Activated naive CD4-positive, alpha-beta T cell treated with anti-CD3 and anti-CD28 coated beads, Interleukin-2, amount 10 ng/mL, durations not matched to agents 7 days and 5 days (primary cell): ENCODE measurements at regions of chr12 and their contacts with region 1.

Region 1: GRCh38 chr12:51341259-51342007 is 5.0 kb downstream of the CELA1 start:
- DNase-seq: peak; percentile 82
- H3K4me3 Mint-ChIP-seq: no peak overlapping the region
- H3K27ac Mint-ChIP-seq: no peak overlapping the region
- H3K4me1 Mint-ChIP-seq: peaks cover 12% of the 10 kb centered on the region
- H3K27me3 Mint-ChIP-seq: peaks cover 7% of the 10 kb centered on the region

Region 2: DNA sequence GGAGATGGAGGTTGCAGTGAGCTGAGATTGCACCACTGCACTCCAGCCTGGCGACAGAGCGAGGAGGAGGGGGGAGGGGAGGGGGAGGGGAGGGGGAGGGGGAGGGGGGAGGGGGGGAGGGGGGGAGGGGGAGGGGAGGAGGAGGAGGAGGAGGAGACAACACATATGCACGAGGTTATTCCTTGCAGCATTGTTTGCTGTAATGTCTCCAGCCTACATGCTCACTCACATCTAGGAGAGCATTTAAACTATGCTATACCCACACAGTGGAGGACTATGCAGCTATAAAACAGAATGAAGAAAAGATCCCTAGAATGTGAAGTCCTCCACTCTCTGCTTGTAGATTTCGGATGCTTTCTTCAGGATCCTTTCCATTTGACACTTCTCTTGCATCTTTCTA is 392.6 kb before region 1 on chr12:
- CTCF ChIA-PET with region 1: no interaction called
- DNase-seq: no peak
- H3K4me3 Mint-ChIP-seq: no peak overlapping the region
- H3K27ac Mint-ChIP-seq: no peak overlapping the region
- H3K4me1 Mint-ChIP-seq: no peaks in the 10 kb centered on the region
- H3K27me3 Mint-ChIP-seq: no peaks in the 10 kb centered on the region

Region 3: DNA sequence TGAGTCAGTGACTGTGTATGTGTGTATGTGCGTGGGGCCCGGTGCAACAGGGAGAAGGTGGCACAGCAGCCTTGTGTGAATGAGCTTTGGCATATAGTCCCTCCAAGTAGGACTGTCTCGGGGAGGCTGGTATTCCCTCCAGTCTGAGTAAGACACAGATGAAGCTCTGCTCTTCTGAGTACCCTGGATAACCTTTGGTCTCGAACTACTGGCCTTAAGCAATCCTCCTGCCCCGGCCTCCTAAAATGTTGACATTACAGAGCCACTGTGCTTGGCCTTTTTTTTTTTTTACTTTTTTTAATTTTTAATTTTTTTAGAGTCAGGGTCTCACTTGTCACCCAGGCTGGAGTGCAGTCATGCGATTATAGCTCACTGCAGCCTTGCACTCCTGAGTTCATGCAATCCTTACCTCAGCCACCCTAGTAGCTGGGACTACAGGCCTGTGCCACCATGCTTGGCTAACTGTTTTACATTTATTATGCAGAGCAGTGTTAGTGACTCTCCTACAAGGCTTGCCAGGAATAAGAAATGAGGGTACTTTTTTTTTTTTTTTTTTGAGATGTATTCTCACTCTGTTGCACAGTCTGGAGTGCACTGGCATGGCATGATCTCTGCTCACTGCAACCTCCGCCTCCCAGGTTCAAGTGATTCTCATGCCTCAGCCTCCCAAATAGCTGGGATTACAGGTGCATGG is 112.2 kb before region 1 on chr12:
- CTCF ChIA-PET with region 1: no interaction called
- DNase-seq: no peak
- H3K4me3 Mint-ChIP-seq: no peak overlapping the region
- H3K27ac Mint-ChIP-seq: no peak overlapping the region
- H3K4me1 Mint-ChIP-seq: peaks cover 3% of the 10 kb centered on the region
- H3K27me3 Mint-ChIP-seq: peaks cover 5% of the 10 kb centered on the region

Region 4: GRCh38 chr12:51253276-51253675 is 88.2 kb before region 1 on chr12:
- CTCF ChIA-PET with region 1: interaction called, 13 read pairs
- DNase-seq: no peak
- H3K4me3 Mint-ChIP-seq: no peak overlapping the region
- H3K27ac Mint-ChIP-seq: no peak overlapping the region
- H3K4me1 Mint-ChIP-seq: peaks cover 6% of the 10 kb centered on the region
- H3K27me3 Mint-ChIP-seq: no peaks in the 10 kb centered on the region

Region 5: DNA sequence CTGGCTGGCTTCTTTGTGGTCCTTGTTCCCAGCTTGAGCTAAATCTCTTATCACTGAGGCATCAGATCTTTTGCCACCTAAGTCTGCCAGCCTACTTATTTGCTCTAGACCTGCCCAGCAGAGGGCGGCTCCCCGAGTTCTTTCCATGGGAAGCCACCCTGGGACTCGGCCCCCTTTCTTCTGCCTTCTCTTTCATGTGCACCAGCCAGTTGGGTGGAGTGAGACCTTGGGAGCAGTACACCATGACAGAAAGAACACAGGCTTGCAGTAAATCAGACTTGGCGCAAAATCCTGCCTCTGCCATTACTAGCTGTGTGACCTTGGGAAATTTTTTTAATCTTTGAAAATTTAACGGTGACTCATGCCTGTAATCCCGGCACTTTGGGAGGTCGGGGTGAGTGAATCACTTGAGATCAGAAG is 78.7 kb before region 1 on chr12:
- CTCF ChIA-PET with region 1: interaction called, 19 read pairs
- DNase-seq: peak; percentile 46
- H3K4me3 Mint-ChIP-seq: no peak overlapping the region
- H3K27ac Mint-ChIP-seq: no peak overlapping the region
- H3K4me1 Mint-ChIP-seq: peaks cover 19% of the 10 kb centered on the region
- H3K27me3 Mint-ChIP-seq: peaks cover 3% of the 10 kb centered on the region

Region 6: GRCh38 chr12:51270067-51270970 is 71.1 kb before region 1 on chr12 and contains the start of gene SMAGP:
- CTCF ChIA-PET with region 1: interaction called, 78 read pairs
- DNase-seq: peak; percentile 70
- H3K4me3 Mint-ChIP-seq: peak within 1 kb of the TSS; percentile 90
- H3K27ac Mint-ChIP-seq: peak within 1 kb of the TSS; percentile 42
- H3K4me1 Mint-ChIP-seq: peaks cover 23% of the 10 kb centered on the region
- H3K27me3 Mint-ChIP-seq: peaks cover 41% of the 10 kb centered on the region

Region 7: GRCh38 chr12:51311389-51311788 is 30.0 kb before region 1 on chr12:
- CTCF ChIA-PET with region 1: interaction called, 13 read pairs
- DNase-seq: no peak
- H3K4me3 Mint-ChIP-seq: no peak overlapping the region
- H3K27ac Mint-ChIP-seq: no peak overlapping the region
- H3K4me1 Mint-ChIP-seq: peaks cover 52% of the 10 kb centered on the region
- H3K27me3 Mint-ChIP-seq: no peaks in the 10 kb centered on the region

Region 8: GRCh38 chr12:51326762-51327439 is 14.5 kb before region 1 on chr12:
- CTCF ChIA-PET with region 1: interaction called, 50 read pairs
- DNase-seq: no peak
- H3K4me3 Mint-ChIP-seq: peak overlapping the region; percentile 10
- H3K27ac Mint-ChIP-seq: peak overlapping the region; percentile 92
- H3K4me1 Mint-ChIP-seq: peaks cover 87% of the 10 kb centered on the region
- H3K27me3 Mint-ChIP-seq: no peaks in the 10 kb centered on the region

Region 9: DNA sequence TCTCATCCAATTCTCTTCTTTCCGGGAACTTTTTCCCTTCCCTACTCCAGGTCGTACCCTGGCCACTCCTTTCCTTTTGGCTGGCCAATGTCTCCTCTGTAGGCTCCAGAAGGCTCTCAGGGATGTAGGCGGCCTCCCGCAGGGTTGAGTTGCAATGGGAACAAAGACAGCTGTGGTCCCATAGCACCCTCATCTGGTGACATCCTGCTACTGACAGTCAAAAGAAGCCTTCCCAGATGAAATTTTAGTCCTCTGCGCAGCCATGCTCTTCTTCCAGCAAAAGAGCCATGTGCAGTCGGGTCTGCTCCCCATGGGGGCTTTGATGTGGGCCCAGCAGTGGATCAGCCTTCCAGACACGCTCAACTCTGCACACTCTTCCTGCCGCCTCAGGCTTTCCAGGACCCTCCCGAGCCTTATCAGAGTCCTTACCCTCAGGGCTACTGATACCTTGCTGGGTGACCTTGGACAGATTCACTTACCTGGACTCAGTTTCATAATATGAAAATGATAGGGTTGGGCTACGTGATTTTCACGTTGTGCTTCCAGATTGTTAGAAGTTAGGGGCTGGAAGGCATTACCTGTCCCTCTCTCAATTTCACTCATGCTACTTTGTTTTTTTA is 10.6 kb after region 1 on chr12:
- CTCF ChIA-PET with region 1: interaction called, 35 read pairs
- DNase-seq: peak; percentile 66
- H3K4me3 Mint-ChIP-seq: no peak overlapping the region
- H3K27ac Mint-ChIP-seq: no peak overlapping the region
- H3K4me1 Mint-ChIP-seq: no peaks in the 10 kb centered on the region
- H3K27me3 Mint-ChIP-seq: peaks cover 22% of the 10 kb centered on the region